ENCODE measurements at regions of chr15 and their contacts with region 1.

Region 1: DNA sequence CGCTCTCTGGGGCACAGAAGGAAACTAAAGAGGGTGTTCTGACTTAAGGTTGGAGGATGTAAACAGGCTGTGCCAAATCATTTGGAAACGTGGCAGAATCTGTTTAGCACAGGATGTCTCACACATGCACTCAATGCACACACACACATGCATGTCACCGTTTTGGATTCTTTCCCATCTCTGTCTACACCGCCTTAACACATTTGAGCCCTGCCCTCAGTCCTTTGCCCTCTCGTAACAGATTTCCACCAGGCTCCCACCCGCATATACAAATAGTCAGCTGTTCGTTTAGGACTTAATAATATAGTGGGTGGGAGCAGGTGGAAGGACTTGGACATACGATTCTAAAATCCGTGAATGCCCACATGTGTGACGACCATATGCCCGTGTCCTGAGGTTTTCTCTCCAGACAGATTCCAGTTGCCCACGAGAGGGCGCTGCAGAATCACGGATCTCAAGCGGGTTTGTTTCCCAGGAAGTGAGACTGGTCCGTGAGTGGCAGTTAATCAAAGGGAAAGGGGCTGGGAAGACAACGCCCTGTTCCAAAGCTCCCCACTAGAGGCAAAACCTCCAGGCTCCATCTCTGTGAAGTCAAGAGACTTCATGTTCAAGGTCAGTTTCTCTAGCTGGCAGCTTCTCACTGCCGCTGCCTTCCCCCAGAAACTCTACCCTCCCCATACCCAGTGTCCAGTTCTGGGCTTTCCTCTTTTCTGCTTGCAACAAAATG is 44.5 kb downstream of the NOX5 start:
- DNase-seq: peak; percentile 82
- H3K4me3 Mint-ChIP-seq: no peak overlapping the region
- H3K27ac Mint-ChIP-seq: no peak overlapping the region
- H3K4me1 Mint-ChIP-seq: peaks cover 22% of the 10 kb centered on the region
- H3K27me3 Mint-ChIP-seq: no peaks in the 10 kb centered on the region

Region 2: GRCh38 chr15:68862415-68862814 is 196.6 kb before region 1 on chr15:
- CTCF ChIA-PET with region 1: no interaction called
- POLR2A ChIA-PET with region 1: no interaction called
- intact Hi-C with region 1: no loop called
- DNase-seq: no peak
- H3K4me3 Mint-ChIP-seq: no peak overlapping the region
- H3K27ac Mint-ChIP-seq: no peak overlapping the region
- H3K4me1 Mint-ChIP-seq: no peaks in the 10 kb centered on the region
- H3K27me3 Mint-ChIP-seq: peaks cover 2% of the 10 kb centered on the region

Region 3: GRCh38 chr15:69160141-69160993 is 101.4 kb after region 1 on chr15 and contains the start of gene GLCE:
- CTCF ChIA-PET with region 1: interaction called, 7 read pairs
- POLR2A ChIA-PET with region 1: no interaction called
- intact Hi-C with region 1: loop called (anchors 5 kb)
- DNase-seq: peak; percentile 95
- H3K4me3 Mint-ChIP-seq: peak within 1 kb of the TSS; percentile 81
- H3K27ac Mint-ChIP-seq: peak within 1 kb of the TSS; percentile 24
- H3K4me1 Mint-ChIP-seq: peaks cover 14% of the 10 kb centered on the region
- H3K27me3 Mint-ChIP-seq: peaks cover 5% of the 10 kb centered on the region
- total RNA-seq, gene GLCE: 3.9 to 4.4 TPM

Region 4: GRCh38 chr15:69265347-69265955 is 206.5 kb after region 1 on chr15:
- CTCF ChIA-PET with region 1: interaction called, 12 read pairs
- POLR2A ChIA-PET with region 1: no interaction called
- intact Hi-C with region 1: loop called (anchors 1 kb)
- DNase-seq: no peak
- H3K4me3 Mint-ChIP-seq: no peak overlapping the region
- H3K27ac Mint-ChIP-seq: no peak overlapping the region
- H3K4me1 Mint-ChIP-seq: no peaks in the 10 kb centered on the region
- H3K27me3 Mint-ChIP-seq: no peaks in the 10 kb centered on the region

Region 5: DNA sequence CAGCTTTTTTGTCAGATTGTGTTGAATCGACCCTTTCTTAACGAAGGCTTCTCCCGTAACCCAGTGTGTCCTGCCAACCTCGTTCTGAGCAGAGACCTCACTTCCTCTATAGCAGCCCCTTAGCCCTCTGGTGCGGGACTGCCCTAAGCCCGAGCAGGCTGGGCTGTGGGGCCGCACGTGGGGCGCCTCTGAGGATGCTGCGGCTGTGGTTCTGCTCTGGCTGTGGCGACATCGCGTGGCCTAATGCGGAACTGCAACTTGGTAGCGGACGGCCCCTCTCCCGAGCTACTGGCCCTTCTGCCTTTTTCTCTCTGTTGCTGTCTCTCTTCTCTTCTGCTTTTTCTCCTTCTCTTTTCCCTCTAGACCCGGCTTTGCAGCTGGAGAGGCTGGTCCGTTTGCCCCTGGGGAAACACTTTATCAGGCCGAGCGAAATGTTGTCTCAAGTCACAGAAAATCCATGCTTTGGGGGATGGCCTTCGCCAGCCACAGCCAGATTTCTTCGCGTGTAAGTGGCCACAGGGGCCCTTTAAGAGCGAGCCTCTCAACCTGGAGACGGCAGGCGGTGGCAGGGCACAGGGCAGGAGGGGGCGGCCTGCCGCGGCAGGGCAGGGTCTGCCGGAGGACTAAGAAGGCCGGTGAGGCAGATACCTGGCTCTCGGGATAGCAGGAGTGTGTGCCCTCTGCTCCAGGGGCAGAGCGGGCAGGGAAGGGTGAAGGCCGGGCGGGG is 335.7 kb after region 1 on chr15:
- CTCF ChIA-PET with region 1: interaction called, 59 read pairs
- POLR2A ChIA-PET with region 1: no interaction called
- intact Hi-C with region 1: loop called (anchors 1 kb)
- DNase-seq: peak; percentile 88
- H3K4me3 Mint-ChIP-seq: no peak overlapping the region
- H3K27ac Mint-ChIP-seq: no peak overlapping the region
- H3K4me1 Mint-ChIP-seq: peaks cover 7% of the 10 kb centered on the region
- H3K27me3 Mint-ChIP-seq: peaks cover 2% of the 10 kb centered on the region

Region 6: GRCh38 chr15:69468241-69469121 is 409.5 kb after region 1 on chr15:
- CTCF ChIA-PET with region 1: interaction called, 8 read pairs
- POLR2A ChIA-PET with region 1: no interaction called
- intact Hi-C with region 1: loop called (anchors 5 kb)
- DNase-seq: peak; percentile 92
- H3K4me3 Mint-ChIP-seq: peak overlapping the region; percentile 30
- H3K27ac Mint-ChIP-seq: peak overlapping the region; percentile 83
- H3K4me1 Mint-ChIP-seq: peaks cover 38% of the 10 kb centered on the region
- H3K27me3 Mint-ChIP-seq: no peaks in the 10 kb centered on the region